ENCODE measurements at regions of chr10 and their contacts with region 1.

Region 1: DNA sequence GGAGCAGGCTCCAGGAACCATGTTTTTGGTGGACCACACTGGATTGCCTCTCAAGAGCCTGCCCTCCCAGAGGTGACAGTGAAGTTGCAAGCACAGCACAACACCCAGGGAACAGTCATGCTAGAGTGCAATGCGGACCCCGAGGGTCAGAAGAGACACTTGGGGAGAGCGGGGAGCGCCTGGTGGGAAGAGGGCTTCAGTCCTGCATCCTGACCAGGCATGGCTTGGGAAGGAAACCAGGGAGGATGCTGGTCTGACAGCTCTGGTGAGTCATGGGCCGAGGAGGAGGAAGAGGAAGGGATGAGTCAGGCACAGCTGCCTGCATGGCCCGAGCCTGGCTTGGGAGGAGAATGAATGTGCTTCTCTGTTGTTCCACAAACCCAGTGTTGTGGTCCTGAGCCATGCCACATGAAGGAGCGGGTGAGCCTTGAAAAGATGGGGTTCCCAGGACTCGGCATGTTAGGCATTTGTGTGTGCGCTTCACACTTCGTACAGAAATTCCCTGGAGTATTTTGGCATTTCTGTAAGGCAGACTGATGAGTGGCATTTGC is 29.5 kb upstream of the ANKRD2 start:
- DNase-seq: peak; percentile 76 to 95
- ATAC-seq: peak; percentile 69 to 86
- H3K4me3 ChIP-seq: no peak overlapping the region
- H3K27ac ChIP-seq: peak overlapping the region; percentile 86 to 92
- H3K4me1 ChIP-seq: peaks cover 57% of the 10 kb centered on the region
- CTCF ChIP-seq: no peak
- EP300 ChIP-seq: no peak
- POLR2A ChIP-seq: no peak
- RAD21 ChIP-seq: no peak

Region 2: GRCh38 chr10:97318772-97319651 is 224.1 kb before region 1 on chr10 and contains the start of gene FRAT1:
- CTCF ChIA-PET with region 1: no interaction called
- POLR2A ChIA-PET with region 1: no interaction called
- DNase-seq: peak; percentile 82 to 91
- ATAC-seq: peak; percentile 86 to 88
- H3K4me3 ChIP-seq: peak within 1 kb of the TSS; percentile 58
- H3K27ac ChIP-seq: peak within 1 kb of the TSS; percentile 95 to 99
- H3K4me1 ChIP-seq: 0 out of 3 replicates have a peak, but pooled peaks cover 3% of the 10 kb centered on the region
- CTCF ChIP-seq: no peak
- EP300 ChIP-seq: no peak
- POLR2A ChIP-seq: peak; percentile 36
- RAD21 ChIP-seq: no peak
- polyA plus RNA-seq, gene FRAT1: 1.3 and 1.5 TPM in 2 replicates

Region 3: DNA sequence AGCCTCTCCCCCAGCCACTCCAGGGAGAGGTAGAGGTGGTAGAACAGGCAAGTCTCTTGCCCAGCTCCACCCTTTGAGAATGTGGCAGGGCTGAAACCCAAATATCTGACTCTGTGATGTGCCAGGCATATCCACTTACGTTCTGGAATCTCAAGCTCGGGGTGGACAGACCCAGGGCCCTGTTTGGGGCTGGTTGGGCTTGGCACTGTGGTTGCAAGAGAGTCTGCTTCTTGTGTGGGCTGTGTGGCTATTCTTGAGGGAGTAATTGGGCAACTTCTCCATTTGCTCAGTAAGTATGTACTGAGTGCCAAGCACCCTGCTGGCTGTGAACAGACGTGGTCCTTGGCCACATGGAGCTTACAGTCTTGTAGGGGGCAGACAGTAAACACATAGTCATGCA is 39.7 kb before region 1 on chr10:
- CTCF ChIA-PET with region 1: interaction called, 12 read pairs
- POLR2A ChIA-PET with region 1: interaction called, 5 read pairs
- DNase-seq: no peak
- ATAC-seq: no peak
- H3K4me3 ChIP-seq: no peak overlapping the region
- H3K27ac ChIP-seq: no peak overlapping the region
- H3K4me1 ChIP-seq: peaks cover 7% of the 10 kb centered on the region; the same call in 2 of the 3 replicates
- CTCF ChIP-seq: no peak
- EP300 ChIP-seq: no peak
- POLR2A ChIP-seq: no peak
- RAD21 ChIP-seq: no peak